ENCODE measurements at regions of chr11 and their contacts with region 1.

Region 1: DNA sequence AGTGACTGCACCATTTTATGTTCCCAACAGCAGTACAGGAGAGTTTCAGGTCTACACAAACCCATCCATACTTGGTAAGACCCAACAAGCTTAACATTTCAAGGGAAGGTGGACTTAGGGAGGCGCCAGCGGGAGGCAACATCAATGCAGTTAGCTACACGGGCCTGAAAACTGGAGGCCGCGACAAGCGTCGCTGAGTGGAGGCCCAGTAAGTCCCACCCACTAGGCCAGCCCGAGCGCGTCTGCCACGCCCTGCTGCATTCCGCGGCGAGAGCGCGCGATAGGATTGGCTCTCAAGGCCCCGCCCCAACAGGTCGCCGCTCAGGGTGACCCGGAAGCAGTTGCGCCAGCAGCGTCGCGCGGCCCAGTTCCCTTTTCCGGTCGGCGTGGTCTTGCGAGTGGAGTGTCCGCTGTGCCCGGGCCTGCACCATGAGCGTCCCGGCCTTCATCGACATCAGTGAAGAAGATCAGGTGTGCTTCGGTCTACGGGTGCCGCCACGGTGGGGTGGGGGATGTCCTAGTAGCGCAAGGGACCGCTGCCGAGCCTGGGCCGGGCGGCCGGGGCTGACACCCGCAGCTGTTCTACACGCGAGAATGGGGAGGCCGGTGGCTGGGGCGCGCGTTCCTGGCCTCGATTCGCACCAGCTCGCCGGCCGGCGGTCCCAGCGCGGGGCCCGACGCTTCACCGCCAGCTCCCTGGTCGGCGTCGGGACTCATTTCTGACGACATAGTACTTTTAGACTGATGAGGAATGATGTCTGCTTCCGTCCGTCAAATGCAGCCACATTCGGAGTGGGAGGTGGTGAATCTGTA is at the start of gene EIF3M:
- DNase-seq: peak; percentile 97
- ATAC-seq: peak; percentile 100
- H3K4me3 Mint-ChIP-seq: peak within 1 kb of the TSS; percentile 90
- H3K27ac Mint-ChIP-seq: peak within 1 kb of the TSS; percentile 97
- H3K4me1 Mint-ChIP-seq: peaks cover 35% of the 10 kb centered on the region
- H3K27me3 Mint-ChIP-seq: no peaks in the 10 kb centered on the region
- CTCF ChIP-seq: no peak
- total RNA-seq, gene EIF3M: 402 to 435 TPM

Region 2: DNA sequence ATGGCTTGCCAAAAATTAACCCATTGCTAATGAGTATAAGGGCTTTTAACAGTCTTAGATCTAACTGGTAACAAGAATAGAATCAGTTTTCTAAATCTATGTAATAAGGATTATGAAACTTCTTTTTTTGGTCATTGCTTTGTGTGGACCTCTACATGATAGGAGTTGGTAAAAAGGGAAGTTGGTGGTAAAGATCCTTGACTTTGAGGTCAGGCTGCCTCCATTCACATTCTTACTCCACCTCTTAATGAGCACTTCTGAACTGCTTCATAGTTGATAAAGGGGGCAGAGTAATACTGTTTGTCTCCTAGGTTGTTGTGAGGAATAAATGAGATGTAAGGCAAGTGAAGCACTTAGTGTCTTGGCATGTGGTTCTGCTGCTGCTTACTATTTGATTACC is 10.6 kb after region 1 on chr11:
- CTCF ChIA-PET with region 1: interaction called, 3 read pairs
- POLR2A ChIA-PET with region 1: interaction called, 15 read pairs
- intact Hi-C with region 1: no loop called
- DNase-seq: no peak
- ATAC-seq: no peak
- H3K4me3 Mint-ChIP-seq: no peak overlapping the region
- H3K27ac Mint-ChIP-seq: peak overlapping the region; percentile 48
- H3K4me1 Mint-ChIP-seq: peaks cover 47% of the 10 kb centered on the region
- H3K27me3 Mint-ChIP-seq: no peaks in the 10 kb centered on the region
- CTCF ChIP-seq: no peak

Region 3: DNA sequence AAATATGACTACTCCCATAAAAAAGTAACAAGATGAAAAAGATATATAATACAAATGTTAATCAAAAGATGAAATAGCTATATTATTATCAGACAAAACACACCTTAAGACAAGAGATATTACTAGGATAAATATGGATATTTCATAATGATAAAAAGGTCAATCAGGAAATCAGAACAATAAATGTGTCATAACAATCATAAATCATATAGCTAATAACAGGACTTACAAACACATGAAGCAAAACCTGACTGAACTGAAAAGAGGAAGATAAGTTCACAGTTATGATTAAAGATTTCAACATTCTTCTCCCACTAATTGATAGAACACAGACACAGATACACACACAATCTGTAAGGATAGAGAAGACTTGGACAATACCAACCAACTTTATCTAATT is 47.2 kb after region 1 on chr11:
- CTCF ChIA-PET with region 1: no interaction called
- POLR2A ChIA-PET with region 1: no interaction called
- intact Hi-C with region 1: no loop called
- DNase-seq: no peak
- ATAC-seq: no peak
- H3K4me3 Mint-ChIP-seq: no peak overlapping the region
- H3K27ac Mint-ChIP-seq: no peak overlapping the region
- H3K4me1 Mint-ChIP-seq: no peaks in the 10 kb centered on the region
- H3K27me3 Mint-ChIP-seq: peaks cover 16% of the 10 kb centered on the region
- CTCF ChIP-seq: no peak

Region 4: GRCh38 chr11:32643526-32643925 is 59.9 kb after region 1 on chr11:
- CTCF ChIA-PET with region 1: no interaction called
- POLR2A ChIA-PET with region 1: no interaction called
- intact Hi-C with region 1: no loop called
- DNase-seq: no peak
- ATAC-seq: no peak
- H3K4me3 Mint-ChIP-seq: no peak overlapping the region
- H3K27ac Mint-ChIP-seq: no peak overlapping the region
- H3K4me1 Mint-ChIP-seq: no peaks in the 10 kb centered on the region
- H3K27me3 Mint-ChIP-seq: peaks cover 2% of the 10 kb centered on the region
- CTCF ChIP-seq: no peak

Measured in activated CD8-positive, alpha-beta T cell treated with anti-CD3 and anti-CD28 coated beads for 36 hours (primary cell).